Testis (tissue), 5 donors: ENCODE measurements at regions of chr20 and their contacts with region 1.

Region 1: GRCh38 chr20:50224531-50225255 is 34.1 kb downstream of the CEBPB start:
- DNase-seq: peak; percentile 80
- H3K4me3 ChIP-seq: no peak overlapping the region
- H3K27ac ChIP-seq: peak overlapping the region; percentile 35 to 88
- H3K4me1 ChIP-seq: peaks cover 14% of the 10 kb centered on the region
- H3K27me3 ChIP-seq: no peaks in the 10 kb centered on the region
- CTCF ChIP-seq: peak in 2 of 3 experiments; percentile 21 to 37
- POLR2A ChIP-seq: no peak

Region 2: GRCh38 chr20:50286609-50287008 is 61.9 kb after region 1 on chr20:
- intact Hi-C with region 1: loop called (anchors 10 kb)
- DNase-seq: peak; percentile 63
- H3K4me3 ChIP-seq: no peak overlapping the region
- H3K27ac ChIP-seq: peak overlapping the region; percentile 89 to 95
- H3K4me1 ChIP-seq: peaks cover 39% of the 10 kb centered on the region
- H3K27me3 ChIP-seq: no peaks in the 10 kb centered on the region
- CTCF ChIP-seq: no peak
- POLR2A ChIP-seq: no peak